PC-9 (cell line): ENCODE measurements at regions of chr3 and their contacts with region 1.

Region 1: GRCh38 chr3:66038726-66039589 is at the start of gene MAGI1:
- DNase-seq: peak; percentile 75 to 94
- H3K4me3 ChIP-seq: peak within 1 kb of the TSS; percentile 82
- H3K27ac ChIP-seq: peak within 1 kb of the TSS; percentile 77
- H3K4me1 ChIP-seq: peaks cover 28% of the 10 kb centered on the region
- H3K27me3 ChIP-seq: no peaks in the 10 kb centered on the region
- CTCF ChIP-seq: no peak
- total RNA-seq, gene MAGI1: 23.3 and 24.1 TPM in 2 replicates

Region 2: DNA sequence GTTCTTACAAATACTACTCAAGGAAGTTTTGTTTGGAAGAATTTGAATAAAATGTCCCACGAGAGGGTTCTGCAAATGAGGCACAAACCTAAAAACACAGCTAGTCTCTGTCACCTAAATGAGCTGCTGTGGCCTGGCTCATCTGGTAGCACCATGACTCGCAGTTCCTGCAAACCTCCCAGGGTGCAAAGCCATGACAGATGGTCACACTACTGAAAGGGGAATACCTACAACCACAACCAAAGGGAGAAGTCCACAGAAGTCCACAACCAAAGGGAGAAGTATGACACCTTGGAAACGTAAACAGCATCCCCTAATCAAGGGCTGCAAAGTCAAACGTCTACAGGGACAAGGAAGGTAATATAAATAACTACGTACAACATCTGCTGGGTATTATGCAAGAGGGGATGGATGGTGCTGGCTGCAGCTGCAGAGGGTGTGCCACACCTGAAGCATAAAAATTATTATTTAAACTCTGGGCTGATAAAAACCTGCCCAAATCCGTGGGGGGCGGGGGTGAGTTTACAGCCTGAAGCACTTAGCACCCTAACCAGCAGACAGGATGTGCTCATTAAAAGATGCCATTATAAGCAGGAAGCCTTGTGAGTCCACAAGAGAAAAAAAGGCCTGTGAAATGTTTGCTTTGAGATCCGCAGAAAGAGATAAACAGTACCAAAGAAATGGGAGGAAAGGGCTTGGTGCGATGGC is 184.2 kb before region 1 on chr3:
- CTCF ChIA-PET with region 1: no interaction called
- POLR2A ChIA-PET with region 1: no interaction called
- intact Hi-C with region 1: loop called (anchors 5 kb)
- DNase-seq: peak; percentile 62 to 90
- H3K4me3 ChIP-seq: no peak overlapping the region
- H3K27ac ChIP-seq: peak overlapping the region; percentile 47
- H3K4me1 ChIP-seq: peaks cover 56% of the 10 kb centered on the region
- H3K27me3 ChIP-seq: no peaks in the 10 kb centered on the region
- CTCF ChIP-seq: no peak

Region 3: GRCh38 chr3:65996589-65996988 is 42.4 kb before region 1 on chr3:
- CTCF ChIA-PET with region 1: no interaction called
- POLR2A ChIA-PET with region 1: interaction called, 4 read pairs
- intact Hi-C with region 1: loop called (anchors 2 kb)
- DNase-seq: peak; percentile 80 to 96
- H3K4me3 ChIP-seq: peak overlapping the region; percentile 17; the same call in 1 of the 2 replicates
- H3K27ac ChIP-seq: peak overlapping the region; percentile 75
- H3K4me1 ChIP-seq: peaks cover 25% of the 10 kb centered on the region
- H3K27me3 ChIP-seq: no peaks in the 10 kb centered on the region
- CTCF ChIP-seq: no peak

Region 4: GRCh38 chr3:66138336-66139313 is 99.7 kb after region 1 on chr3:
- CTCF ChIA-PET with region 1: no interaction called
- POLR2A ChIA-PET with region 1: no interaction called
- intact Hi-C with region 1: loop called (anchors 2 kb)
- DNase-seq: peak; percentile 53 to 57
- H3K4me3 ChIP-seq: no peak overlapping the region
- H3K27ac ChIP-seq: no peak overlapping the region
- H3K4me1 ChIP-seq: peaks cover 14% of the 10 kb centered on the region
- H3K27me3 ChIP-seq: no peaks in the 10 kb centered on the region
- CTCF ChIP-seq: peak; percentile 77

Region 5: GRCh38 chr3:66195347-66195783 is 156.4 kb after region 1 on chr3:
- CTCF ChIA-PET with region 1: no interaction called
- POLR2A ChIA-PET with region 1: no interaction called
- intact Hi-C with region 1: loop called (anchors 2 kb)
- DNase-seq: peak; percentile 41 to 55
- H3K4me3 ChIP-seq: peak overlapping the region; percentile 66
- H3K27ac ChIP-seq: no peak overlapping the region
- H3K4me1 ChIP-seq: no peaks in the 10 kb centered on the region; the same call in 1 of the 2 replicates
- H3K27me3 ChIP-seq: no peaks in the 10 kb centered on the region
- CTCF ChIP-seq: no peak; the same call in 1 of the 2 replicates